BJ (cell line): ENCODE measurements at regions of chr6 and their contacts with region 1.

Region 1: DNA sequence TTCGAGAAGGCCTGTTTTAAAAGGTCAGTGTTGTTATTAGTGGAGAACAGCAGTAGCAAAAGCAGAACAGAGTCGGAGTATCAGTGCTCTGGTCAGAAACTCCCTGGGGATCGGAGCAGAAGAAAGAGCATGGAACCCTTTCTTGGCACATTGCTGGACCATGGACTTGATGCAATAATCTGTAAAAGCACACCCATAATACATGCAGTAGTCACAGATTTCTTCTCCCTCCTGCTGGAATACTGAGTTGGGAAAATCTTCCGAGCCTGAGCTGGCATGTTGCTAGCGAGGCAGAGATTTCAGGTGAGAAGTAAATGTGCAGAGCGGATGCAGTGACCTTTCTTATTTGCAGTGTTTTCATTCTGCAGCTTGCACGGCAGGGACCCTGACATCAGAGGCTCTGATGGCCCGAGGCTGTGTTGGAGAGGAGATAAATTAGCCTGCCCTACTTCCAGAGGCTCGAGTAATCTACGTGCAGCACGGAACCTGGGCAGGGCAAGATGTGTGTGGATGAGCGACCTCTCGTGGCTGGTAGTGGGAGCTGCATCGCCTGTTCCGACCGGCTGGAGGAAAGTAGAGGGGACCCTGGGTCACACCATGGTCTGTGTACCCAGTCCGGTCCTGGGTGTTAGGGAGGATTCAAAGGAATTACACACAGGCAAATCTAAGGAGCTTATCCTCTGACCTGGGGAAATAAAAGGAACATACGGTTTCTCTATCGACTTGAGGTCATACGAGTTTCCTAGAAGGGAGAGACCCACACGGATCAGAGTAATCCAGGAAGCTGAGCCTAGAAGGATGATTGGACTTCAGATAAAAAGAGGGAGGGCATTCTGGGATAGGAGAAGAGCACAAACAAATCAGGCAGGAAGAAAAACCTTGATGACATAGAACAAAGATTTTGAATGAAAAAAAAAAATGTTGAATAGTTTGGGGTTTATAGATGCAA is 137.0 kb upstream of the STMND1 start:
- DNase-seq: no peak
- H3K4me3 ChIP-seq: no peak overlapping the region
- H3K27me3 ChIP-seq: no peaks in the 10 kb centered on the region
- CTCF ChIP-seq: peak; percentile 95

Region 2: DNA sequence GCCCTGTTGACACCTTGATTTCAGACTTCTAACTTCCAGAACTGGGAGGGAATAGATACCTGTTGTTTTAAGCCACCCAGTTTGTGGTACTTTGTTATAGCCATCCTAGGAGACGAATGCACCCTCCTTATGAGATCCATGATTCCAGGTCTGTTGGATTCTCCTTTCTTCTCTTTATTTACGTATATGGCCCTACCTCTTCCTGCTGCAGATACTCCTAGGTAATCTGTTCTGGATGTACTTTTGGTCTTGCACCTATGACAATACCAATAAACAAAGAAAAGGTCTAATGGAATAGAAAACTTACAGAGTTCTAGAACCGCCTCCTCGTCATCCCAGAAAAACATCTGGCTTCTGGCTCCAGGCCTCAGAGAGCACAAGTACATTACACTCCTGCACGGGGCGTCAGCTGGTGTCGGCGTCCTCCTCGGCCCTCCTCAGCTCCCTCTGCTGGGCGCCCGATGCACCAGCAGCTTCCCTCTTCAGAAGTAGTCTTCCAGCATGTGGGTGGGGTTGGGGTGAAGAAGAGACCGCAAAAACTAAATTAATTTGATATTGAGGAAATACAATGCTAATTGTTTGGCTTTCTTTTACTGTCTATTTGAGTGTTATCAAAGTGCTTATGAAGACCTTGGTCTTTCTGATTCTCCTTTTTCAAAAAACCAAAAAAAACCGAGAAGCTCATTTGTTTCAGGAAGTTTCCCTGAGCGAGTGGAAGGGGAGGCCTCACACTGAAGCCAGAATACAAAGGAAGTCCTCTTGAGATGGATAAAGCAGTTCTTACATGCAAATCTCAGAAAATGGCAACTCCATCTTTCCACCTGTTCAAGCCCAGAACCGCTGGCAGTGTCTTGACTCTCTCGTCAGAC is 193.9 kb before region 1 on chr6:
- CTCF ChIA-PET with region 1: interaction called, 76 read pairs
- POLR2A ChIA-PET with region 1: no interaction called
- DNase-seq: no peak
- H3K4me3 ChIP-seq: no peak overlapping the region
- H3K27me3 ChIP-seq: no peaks in the 10 kb centered on the region
- CTCF ChIP-seq: peak; percentile 89

Region 3: DNA sequence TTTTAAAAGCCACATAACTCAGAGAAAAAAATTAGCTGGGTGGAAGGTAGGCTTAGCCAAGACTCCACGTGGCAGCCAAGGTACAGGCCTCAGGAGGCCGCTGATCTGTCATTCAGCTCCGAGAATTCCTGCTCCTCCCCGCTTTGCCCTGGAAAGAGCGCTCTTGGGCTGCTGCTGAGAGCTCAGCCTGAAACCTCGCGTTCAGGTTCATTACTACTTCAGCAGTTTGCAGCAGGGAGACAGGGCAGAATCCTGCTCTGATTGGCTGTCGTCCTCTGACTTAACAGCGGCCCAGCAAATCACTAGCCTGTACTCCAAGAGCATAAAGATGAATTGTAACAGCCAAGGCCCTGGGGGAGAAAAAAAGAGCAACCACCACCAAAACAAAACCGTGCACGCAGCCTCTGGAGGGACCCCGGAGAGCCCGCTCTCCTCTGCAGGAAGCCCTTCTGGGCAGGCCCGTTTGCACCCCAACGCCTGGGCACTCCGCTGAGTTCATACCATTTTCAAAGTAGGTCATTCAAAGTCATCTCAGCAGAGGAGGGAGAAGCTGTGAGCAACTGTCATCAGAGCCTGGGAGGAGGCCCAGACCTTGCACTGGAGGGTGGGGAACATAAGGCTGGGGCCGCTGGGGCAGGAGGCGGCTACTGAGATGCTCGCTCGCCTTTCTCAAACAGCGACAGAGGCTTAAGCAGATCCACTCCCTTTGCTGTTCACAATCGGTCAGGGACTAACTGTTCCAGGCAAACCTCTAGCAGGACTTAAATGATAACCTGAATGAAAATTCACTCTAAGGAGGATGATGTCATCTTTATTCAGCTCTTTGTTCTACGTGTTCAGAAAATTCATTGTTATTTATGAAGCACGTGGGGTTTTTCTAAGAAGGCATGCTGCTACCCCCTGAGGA is 161.3 kb before region 1 on chr6:
- CTCF ChIA-PET with region 1: interaction called, 12 read pairs
- POLR2A ChIA-PET with region 1: no interaction called
- DNase-seq: no peak
- H3K4me3 ChIP-seq: no peak overlapping the region
- H3K27me3 ChIP-seq: no peaks in the 10 kb centered on the region; the same call in 1 of the 2 replicates
- CTCF ChIP-seq: no peak

Region 4: GRCh38 chr6:16947375-16948015 is 17.3 kb before region 1 on chr6:
- CTCF ChIA-PET with region 1: interaction called, 57 read pairs
- POLR2A ChIA-PET with region 1: no interaction called
- DNase-seq: peak; percentile 100
- H3K4me3 ChIP-seq: no peak overlapping the region
- H3K27me3 ChIP-seq: no peaks in the 10 kb centered on the region
- CTCF ChIP-seq: no peak

Region 5: GRCh38 chr6:16982807-16983206 is 18.0 kb after region 1 on chr6:
- CTCF ChIA-PET with region 1: interaction called, 29 read pairs
- POLR2A ChIA-PET with region 1: no interaction called
- DNase-seq: peak; percentile 76
- H3K4me3 ChIP-seq: no peak overlapping the region
- H3K27me3 ChIP-seq: no peaks in the 10 kb centered on the region; the same call in 1 of the 2 replicates
- CTCF ChIP-seq: no peak

Region 6: GRCh38 chr6:17086469-17086868 is 121.6 kb after region 1 on chr6:
- CTCF ChIA-PET with region 1: interaction called, 24 read pairs
- POLR2A ChIA-PET with region 1: no interaction called
- DNase-seq: peak; percentile 40
- H3K4me3 ChIP-seq: no peak overlapping the region
- H3K27me3 ChIP-seq: no peaks in the 10 kb centered on the region; the same call in 1 of the 2 replicates
- CTCF ChIP-seq: peak; percentile 66